Cardiac septum (tissue), 1 donor: ENCODE measurements at regions of chr1 and their contacts with region 1.

Region 1: GRCh38 chr1:19251305-19252196 is at the starts of genes EMC1 and MRTO4:
- DNase-seq: peak; percentile 94
- total RNA-seq, gene EMC1: 28.6 TPM
- total RNA-seq, gene MRTO4: 14.8 TPM

Region 2: DNA sequence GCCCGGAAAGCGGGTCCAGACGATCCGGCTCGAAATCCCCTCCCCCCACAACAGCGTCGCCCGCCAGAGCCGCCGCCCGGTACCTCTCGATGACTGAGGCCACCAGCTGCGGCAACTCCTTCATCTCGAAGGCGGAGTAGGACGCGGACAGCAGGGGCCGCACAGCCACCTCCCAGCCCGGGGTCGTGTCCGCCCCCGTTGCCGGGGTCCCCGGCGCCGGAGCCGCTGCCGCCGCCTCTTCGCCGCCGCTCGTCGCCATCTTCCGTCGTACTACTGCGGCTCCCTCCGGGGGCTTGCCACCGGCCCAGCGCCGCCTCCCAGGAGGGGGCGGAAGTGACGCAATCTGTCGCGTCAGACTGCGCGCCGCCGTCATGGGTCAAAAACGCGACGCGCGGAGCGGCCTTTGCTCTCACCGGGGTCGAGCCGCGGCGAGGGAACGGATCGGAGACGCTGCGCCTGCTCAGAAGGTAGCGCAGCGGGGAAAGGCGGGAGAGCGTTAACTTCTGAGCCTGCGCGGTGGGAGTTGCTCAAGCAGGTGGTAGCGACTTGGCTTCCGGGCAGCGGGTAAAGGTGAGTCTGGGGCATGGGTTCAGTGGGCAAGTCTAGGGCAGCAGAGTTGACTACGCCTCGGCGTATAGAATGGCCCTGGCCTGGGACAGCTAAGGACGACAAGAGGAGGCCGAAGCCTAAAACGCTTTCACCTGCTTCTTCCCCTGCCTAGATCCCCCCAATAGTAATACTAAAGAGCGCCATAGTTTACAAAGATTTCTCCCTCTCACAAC is 41.4 kb before region 1 on chr1 and contains the start of gene UBR4:
- intact Hi-C with region 1: loop called (anchors 5 kb)
- DNase-seq: peak; percentile 97
- total RNA-seq, gene UBR4: 95.7 TPM

Region 3: GRCh38 chr1:19311959-19312781 is 60.6 kb after region 1 on chr1 and contains the starts of genes AKR7A2 and SLC66A1:
- intact Hi-C with region 1: loop called (anchors 5 kb)
- DNase-seq: peak; percentile 96
- total RNA-seq, gene AKR7A2: 33.5 TPM
- total RNA-seq, gene SLC66A1: 7.5 TPM